Activated CD4-positive, alpha-beta T cell treated with anti-CD3 and anti-CD28 coated beads, Interleukin-2, amount 10 ng/mL, durations not matched to agents 24 days and 14 days (primary cell): ENCODE measurements at regions of chr21 and their contacts with region 1.

Region 1: GRCh38 chr21:34807146-34807880 is 138.5 kb downstream of the CLIC6 start:
- DNase-seq: peak; percentile 84
- H3K4me3 Mint-ChIP-seq: peak overlapping the region; percentile 57
- H3K27ac Mint-ChIP-seq: peak overlapping the region; percentile 94
- H3K4me1 Mint-ChIP-seq: peaks cover 66% of the 10 kb centered on the region
- H3K27me3 Mint-ChIP-seq: no peaks in the 10 kb centered on the region

Region 2: GRCh38 chr21:34845521-34846451 is 38.5 kb after region 1 on chr21:
- intact Hi-C with region 1: loop called (anchors 2 kb)
- DNase-seq: peak; percentile 87
- H3K4me3 Mint-ChIP-seq: peak overlapping the region; percentile 67
- H3K27ac Mint-ChIP-seq: peak overlapping the region; percentile 69
- H3K4me1 Mint-ChIP-seq: peaks cover 41% of the 10 kb centered on the region
- H3K27me3 Mint-ChIP-seq: no peaks in the 10 kb centered on the region